ENCODE measurements at regions of chr3 and their contacts with region 1.

Region 1: DNA sequence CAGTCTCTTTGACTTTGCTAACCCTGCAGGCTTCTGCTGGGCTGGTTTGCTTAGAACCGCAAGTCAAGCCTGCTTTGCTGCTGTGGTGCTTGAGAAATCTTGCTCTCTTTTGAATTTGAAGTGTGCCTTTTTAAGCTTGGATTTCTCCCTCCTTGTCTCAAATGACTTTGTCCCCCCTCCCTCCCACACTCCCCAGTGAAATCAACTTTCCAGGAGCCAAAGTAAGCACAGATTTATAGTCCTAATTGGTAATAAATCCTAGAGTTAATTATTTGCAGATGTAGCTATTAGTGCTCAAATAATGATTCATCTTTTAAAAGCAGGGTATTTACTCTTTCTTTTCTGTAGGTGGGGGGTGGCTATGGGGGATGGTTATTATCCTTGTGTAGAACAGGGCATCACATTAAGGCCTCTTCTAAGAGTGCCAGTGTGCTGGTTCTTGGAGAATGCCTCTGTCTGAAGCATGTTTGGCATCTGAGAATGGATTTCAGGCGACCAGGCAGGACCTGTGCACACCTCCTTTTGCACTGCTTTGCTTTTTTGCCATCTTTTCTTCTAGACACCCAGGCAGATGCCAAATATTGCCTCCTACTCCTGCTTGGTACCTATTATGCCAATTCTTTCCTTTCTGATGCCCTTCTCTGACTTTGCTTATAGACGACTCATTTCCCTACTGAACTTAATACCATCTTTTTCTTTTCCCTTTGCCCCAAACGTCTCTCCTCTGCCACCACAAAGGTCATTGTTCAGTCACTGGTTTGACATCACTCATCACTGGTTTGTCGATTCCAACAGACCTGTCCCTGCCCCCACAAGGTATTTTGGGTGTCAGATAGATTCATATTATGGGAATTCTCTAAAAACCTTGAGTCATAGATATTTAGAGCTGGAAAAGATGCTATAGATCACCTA is 50.7 kb downstream of the CLDN11 start:
- DNase-seq: peak; percentile 62
- H3K4me3 ChIP-seq: no peak overlapping the region
- H3K27ac ChIP-seq: no peak overlapping the region
- H3K4me1 ChIP-seq: peaks cover 5% of the 10 kb centered on the region
- H3K27me3 ChIP-seq: no peaks in the 10 kb centered on the region
- CTCF ChIP-seq: no peak

Region 2: GRCh38 chr3:170207717-170208116 is 261.7 kb before region 1 on chr3:
- CTCF ChIA-PET with region 1: no interaction called
- POLR2A ChIA-PET with region 1: no interaction called
- intact Hi-C with region 1: no loop called
- DNase-seq: no peak
- H3K4me3 ChIP-seq: no peak overlapping the region
- H3K27ac ChIP-seq: no peak overlapping the region
- H3K4me1 ChIP-seq: no peaks in the 10 kb centered on the region
- H3K27me3 ChIP-seq: no peaks in the 10 kb centered on the region
- CTCF ChIP-seq: no peak

Region 3: DNA sequence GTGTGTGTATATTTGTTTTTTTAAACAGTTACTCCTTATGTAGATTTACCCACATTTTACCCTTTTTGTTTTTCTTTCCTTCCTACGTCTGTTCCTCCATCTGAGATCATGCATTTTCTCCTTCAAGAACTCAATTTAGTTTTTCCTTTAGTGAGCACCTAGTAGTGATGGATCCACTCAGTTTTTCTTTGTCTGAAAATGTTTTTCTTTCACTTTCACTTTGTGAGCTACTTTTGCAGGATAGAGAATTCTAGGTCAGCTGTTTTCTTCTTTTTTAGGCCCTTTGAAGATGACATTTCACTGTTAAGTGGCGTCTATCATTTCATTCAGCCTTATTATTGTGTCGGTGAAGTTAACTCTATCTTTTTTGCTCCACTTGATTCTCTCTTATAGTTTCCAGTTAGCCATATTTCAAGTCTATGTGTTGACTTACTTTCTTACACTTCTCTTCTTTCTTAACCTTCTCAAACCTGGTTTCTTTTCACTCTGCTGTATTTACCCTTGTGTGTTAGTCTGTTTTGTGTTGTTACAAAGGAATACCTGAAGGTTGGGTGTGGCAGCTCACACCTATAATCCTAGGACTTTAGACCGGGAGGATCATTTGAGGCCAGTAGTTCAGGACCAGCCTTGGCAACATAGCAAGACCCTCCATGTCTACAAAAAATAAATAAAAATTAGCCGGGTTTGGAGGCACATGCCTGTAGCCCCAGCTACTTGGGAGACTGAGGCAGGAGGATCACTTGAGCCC is 191.4 kb before region 1 on chr3:
- CTCF ChIA-PET with region 1: no interaction called
- POLR2A ChIA-PET with region 1: no interaction called
- intact Hi-C with region 1: no loop called
- DNase-seq: no peak
- H3K4me3 ChIP-seq: no peak overlapping the region
- H3K27ac ChIP-seq: no peak overlapping the region
- H3K4me1 ChIP-seq: no peaks in the 10 kb centered on the region
- H3K27me3 ChIP-seq: no peaks in the 10 kb centered on the region
- CTCF ChIP-seq: no peak

Region 4: GRCh38 chr3:170458285-170458684 is 11.1 kb before region 1 on chr3:
- CTCF ChIA-PET with region 1: no interaction called
- POLR2A ChIA-PET with region 1: interaction called, 28 read pairs
- intact Hi-C with region 1: no loop called
- DNase-seq: no peak
- H3K4me3 ChIP-seq: no peak overlapping the region
- H3K27ac ChIP-seq: no peak overlapping the region
- H3K4me1 ChIP-seq: no peaks in the 10 kb centered on the region
- H3K27me3 ChIP-seq: peaks cover 13% of the 10 kb centered on the region
- CTCF ChIP-seq: no peak